Activated T-helper 1 cell treated with anti-CD3 and anti-CD28 coated beads, Interleukin-12 subunit alpha, Interleukin-12 subunit beta, Interleukin-2, Interleukin-4 antibody, amounts not matched to agents 30 ng/mL and 10 ng/mL and 1 ng/mL, durations not matched to agents 14 hours and 24 hours and 36 hours (primary cell): ENCODE measurements at regions of chr11 and their contacts with region 1.

Region 1: DNA sequence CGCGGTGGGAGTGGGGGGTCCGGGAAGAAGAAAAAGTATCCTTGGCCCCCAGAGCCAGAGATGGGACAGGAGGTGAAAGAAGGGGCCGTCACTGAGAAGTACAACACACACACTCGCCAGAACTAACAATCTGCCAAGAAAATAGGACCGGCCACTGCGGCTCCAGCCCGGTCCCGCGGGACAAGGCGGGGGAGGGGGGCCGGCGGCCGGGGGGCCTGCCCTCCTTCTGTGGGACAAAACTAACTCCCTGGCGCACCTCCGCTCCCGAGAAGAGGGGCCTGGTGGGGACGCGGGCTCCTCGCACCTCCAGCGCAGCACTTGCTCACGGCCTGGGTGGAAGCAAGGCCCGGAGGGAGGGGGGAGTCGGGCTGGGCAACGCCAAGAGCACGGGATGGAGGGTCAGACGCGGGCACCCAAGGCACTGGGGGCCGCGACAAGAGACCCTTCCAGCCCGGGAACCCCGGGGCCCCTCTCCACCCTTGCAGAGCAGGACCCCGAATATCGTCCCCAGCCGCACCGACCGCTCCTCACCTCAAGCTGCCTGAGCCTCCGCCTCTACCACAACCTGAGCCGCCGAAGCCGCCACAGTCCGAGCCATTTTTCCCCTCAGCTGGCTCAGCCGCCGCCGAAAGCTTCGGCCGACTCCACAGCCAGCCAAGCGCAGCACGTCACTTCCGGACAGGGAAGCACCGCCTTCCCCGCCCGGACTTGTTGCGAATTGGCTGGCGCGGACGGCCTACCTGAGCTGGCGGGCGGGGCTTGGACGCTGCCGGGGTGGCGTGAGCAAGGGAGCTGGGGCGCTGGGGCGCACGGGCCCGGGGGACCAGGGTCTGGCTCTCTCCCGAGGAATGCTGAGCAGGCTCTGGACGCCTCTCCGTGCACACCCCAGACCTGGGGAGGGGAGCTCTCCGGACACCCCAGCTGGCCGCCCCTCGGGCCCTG is at the start of gene PIK3C2A:
- DNase-seq: peak; percentile 93
- H3K4me3 Mint-ChIP-seq: peak within 1 kb of the TSS; percentile 98
- H3K27ac Mint-ChIP-seq: peak within 1 kb of the TSS; percentile 94
- H3K4me1 Mint-ChIP-seq: peaks cover 35% of the 10 kb centered on the region
- H3K27me3 Mint-ChIP-seq: no peaks in the 10 kb centered on the region
- total RNA-seq, gene PIK3C2A: 31.7 and 31.8 TPM in 2 replicates

Region 2: DNA sequence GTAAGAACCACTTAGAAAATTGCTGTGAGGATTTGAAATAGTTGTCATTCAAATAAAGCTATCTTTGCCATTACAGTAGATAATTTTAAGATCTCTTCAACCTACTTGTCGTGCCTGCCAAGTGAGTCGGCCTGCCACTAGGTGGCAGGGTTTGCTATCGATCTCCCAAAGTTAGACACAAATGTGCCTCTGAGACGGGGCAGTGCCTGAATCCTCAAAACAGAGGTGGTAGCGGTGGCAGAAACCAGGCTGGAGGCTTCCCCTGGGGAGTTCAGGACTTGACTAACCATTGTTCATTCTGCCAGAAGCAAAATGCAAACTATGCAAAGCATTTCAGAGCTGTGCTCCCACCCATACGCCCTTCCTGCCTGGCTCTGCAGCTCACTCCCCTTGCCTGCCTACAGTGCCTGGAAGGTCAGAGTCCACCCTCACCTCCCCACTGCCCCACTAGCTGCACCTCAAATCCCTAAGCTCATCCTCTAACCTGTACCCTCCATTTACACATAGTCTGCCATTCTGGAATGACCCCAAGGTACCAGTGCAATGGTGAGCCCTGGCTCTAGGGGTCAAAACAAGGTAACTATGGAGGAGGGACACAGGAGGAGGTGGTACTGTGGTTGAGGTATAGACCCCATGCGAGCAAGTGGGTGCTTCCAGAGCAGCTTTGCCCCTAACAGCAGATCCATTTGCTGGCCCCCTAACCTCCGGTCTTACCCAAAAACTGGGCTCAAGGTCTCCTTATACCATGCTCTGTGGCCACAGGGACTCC is 387.1 kb before region 1 on chr11:
- intact Hi-C with region 1: loop called (anchors 10 kb)
- DNase-seq: peak; percentile 16
- H3K4me3 Mint-ChIP-seq: no peak overlapping the region
- H3K27ac Mint-ChIP-seq: no peak overlapping the region
- H3K4me1 Mint-ChIP-seq: peaks cover 12% of the 10 kb centered on the region
- H3K27me3 Mint-ChIP-seq: peaks cover 3% of the 10 kb centered on the region

Region 3: GRCh38 chr11:17129003-17129402 is 78.6 kb before region 1 on chr11:
- intact Hi-C with region 1: no loop called
- DNase-seq: no peak
- H3K4me3 Mint-ChIP-seq: no peak overlapping the region
- H3K27ac Mint-ChIP-seq: no peak overlapping the region
- H3K4me1 Mint-ChIP-seq: no peaks in the 10 kb centered on the region
- H3K27me3 Mint-ChIP-seq: no peaks in the 10 kb centered on the region

Region 4: GRCh38 chr11:17154409-17155159 is 53.0 kb before region 1 on chr11:
- intact Hi-C with region 1: loop called (anchors 5 kb)
- DNase-seq: no peak
- H3K4me3 Mint-ChIP-seq: no peak overlapping the region
- H3K27ac Mint-ChIP-seq: peak overlapping the region; percentile 71
- H3K4me1 Mint-ChIP-seq: peaks cover 18% of the 10 kb centered on the region
- H3K27me3 Mint-ChIP-seq: no peaks in the 10 kb centered on the region

Region 5: DNA sequence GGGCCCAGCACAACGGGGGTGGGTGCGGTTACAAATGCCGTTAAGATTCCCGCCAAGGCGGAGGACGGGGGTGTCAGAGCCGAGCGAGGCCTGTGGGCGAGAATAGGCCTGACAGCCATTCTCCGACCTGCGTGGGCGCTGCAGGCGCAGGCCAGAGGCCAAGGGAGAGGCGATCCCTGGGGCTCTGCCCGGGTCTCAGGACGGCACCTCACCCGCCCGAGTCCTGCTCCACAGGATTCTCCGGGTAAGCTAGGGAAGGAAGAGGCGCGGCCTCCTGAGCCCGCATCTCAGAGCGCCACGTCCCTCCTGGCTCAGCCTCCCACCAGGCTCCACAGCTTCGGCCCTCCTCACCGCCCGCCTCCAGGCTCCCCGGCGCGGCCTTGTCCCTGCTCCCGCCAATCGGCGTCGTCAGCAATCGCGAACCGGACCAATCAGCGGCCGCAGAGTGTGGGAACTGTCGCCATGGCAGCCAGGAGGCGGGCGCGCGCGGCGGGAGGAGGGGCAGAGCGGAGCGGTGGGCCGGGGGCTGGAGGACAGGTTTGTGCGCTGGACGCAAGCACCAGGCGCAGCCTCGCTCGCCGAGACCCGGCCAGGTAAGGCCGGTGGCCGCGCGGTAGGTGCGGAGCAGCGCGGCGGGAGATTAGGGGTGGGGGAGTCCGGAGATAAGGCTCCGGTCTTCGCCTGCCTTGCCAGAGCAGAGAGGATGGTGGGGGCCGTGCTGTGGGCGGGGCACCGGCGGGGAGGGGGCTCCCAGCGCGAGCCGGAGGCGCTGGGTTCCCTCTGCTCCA is 68.8 kb after region 1 on chr11 and contains the start of gene NUCB2:
- intact Hi-C with region 1: loop called (anchors 1 kb)
- DNase-seq: peak; percentile 95
- H3K4me3 Mint-ChIP-seq: peak within 1 kb of the TSS; percentile 87
- H3K27ac Mint-ChIP-seq: peak within 1 kb of the TSS; percentile 77
- H3K4me1 Mint-ChIP-seq: peaks cover 48% of the 10 kb centered on the region
- H3K27me3 Mint-ChIP-seq: peaks cover 3% of the 10 kb centered on the region
- total RNA-seq, gene NUCB2: 51.1 and 61.7 TPM in 2 replicates

Region 6: GRCh38 chr11:18012863-18013781 is 805.5 kb after region 1 on chr11 and contains the start of gene SERGEF:
- intact Hi-C with region 1: loop called (anchors 10 kb)
- DNase-seq: peak; percentile 92
- H3K4me3 Mint-ChIP-seq: peak within 1 kb of the TSS; percentile 97
- H3K27ac Mint-ChIP-seq: peak within 1 kb of the TSS; percentile 98
- H3K4me1 Mint-ChIP-seq: peaks cover 44% of the 10 kb centered on the region
- H3K27me3 Mint-ChIP-seq: peaks cover 5% of the 10 kb centered on the region
- total RNA-seq, gene SERGEF: 24.5 and 32.8 TPM in 2 replicates